A549 (cell line): ENCODE measurements at regions of chr19 and their contacts with region 1.

Region 1: DNA sequence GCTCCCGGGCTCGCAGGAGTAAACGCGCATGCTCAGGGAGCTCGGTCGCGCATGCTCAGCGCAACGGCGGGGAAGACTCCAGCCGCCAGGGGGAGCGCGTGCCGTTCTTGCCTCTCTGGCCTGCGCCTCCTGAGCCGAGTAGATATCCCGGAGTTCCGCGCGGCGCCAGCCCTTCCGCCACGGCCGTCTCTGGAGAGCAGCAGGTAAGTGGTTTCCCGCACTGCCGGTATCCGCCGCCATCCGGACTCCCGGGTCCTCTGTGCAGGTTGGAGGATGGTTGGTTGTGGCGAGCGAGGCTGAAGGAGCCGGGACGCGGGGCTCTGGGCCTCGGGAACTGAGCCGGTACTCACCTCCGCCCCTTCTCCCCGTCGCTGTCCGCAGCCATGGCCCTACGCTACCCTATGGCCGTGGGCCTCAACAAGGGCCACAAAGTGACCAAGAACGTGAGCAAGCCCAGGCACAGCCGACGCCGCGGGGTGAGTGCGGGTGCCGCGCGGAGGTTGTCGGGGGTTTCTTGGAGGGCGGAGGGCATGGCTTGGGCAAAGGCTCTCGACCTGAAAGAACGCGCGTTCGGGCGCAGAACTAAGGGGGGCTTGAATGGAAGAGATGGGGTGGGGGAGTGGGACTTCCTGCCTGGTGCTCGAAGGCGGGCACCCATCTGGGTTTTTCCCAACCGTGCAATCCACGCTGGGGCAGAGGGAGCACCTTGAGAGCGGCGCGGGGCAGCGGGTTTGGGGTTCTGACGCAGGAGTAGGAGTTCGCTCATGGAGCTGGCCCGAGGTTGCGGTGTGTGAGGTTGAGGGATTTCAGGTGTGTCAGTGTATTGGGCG is at the start of gene RPL36:
- DNase-seq: peak; percentile 84 to 96
- ATAC-seq: peak; percentile 16 to 64
- H3K4me3 ChIP-seq: peak within 1 kb of the TSS; percentile 92
- H3K27ac ChIP-seq: peak within 1 kb of the TSS; percentile 93 to 97
- H3K4me1 ChIP-seq: peaks cover 13% of the 10 kb centered on the region
- CTCF ChIP-seq: peak; percentile 63
- EP300 ChIP-seq: no peak
- POLR2A ChIP-seq: peak; percentile 94
- RAD21 ChIP-seq: no peak
- polyA plus RNA-seq, gene RPL36: 329 and 368 TPM in 2 replicates

Region 2: DNA sequence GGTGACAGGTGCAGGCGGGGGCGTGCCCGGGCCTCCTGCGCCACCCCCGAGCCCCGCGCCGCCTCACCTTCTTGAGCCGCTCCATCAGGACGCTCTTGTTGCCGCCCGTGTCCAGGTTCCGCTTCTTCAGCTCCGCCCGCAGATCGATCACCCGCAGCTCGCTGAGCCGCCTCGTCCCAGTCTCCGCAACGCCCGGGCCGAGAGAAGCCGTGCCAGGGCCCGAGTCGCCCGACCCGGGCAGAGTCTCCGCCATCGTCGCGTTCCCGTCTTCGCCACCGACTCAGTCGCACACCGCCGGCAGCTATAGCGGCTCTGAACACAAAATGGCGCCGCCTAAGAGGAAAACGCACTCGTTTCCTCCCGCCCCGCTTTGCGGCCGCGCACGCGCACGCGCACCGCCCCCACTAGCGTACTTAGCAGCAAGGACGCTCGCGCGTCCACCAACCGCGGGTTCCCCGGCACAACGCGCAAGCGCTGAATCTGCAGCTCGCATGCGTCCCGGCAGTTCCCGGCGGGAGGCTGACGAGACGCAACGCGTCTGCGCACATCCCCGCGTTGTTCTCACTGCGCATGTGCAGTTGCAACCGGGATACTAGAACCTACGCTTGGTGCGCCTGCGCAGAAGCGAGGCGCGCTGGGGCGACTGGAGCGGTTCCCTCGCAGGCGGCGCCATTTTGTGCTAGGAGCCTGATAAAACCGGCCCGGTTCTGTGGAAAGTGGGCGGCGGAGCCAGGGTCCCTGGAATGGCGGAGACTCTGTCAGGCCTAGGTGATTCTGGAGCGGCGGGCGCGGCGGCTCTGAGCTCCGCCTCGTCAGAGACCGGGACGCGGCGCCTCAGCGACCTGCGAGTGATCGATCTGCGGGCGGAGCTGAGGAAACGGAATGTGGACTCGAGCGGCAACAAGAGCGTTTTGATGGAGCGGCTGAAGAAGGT is 67.6 kb before region 1 on chr19 and contains the starts of genes SAFB and SAFB2:
- CTCF ChIA-PET with region 1: interaction called, 5 read pairs
- POLR2A ChIA-PET with region 1: interaction called, 13 read pairs
- DNase-seq: peak; percentile 90 to 99
- ATAC-seq: peak; percentile 90 to 94
- H3K4me3 ChIP-seq: peak within 1 kb of the TSS; percentile 93
- H3K27ac ChIP-seq: peak within 1 kb of the TSS; percentile 93 to 97
- H3K4me1 ChIP-seq: peaks cover 30% of the 10 kb centered on the region
- CTCF ChIP-seq: no peak
- EP300 ChIP-seq: no peak
- POLR2A ChIP-seq: peak; percentile 88
- RAD21 ChIP-seq: no peak
- polyA plus RNA-seq, gene SAFB: 37.5 and 55.0 TPM in 2 replicates
- polyA plus RNA-seq, gene SAFB2: 23.4 and 33.2 TPM in 2 replicates

Region 3: GRCh38 chr19:5703829-5704818 is 13.8 kb after region 1 on chr19:
- CTCF ChIA-PET with region 1: interaction called, 7 read pairs
- POLR2A ChIA-PET with region 1: interaction called, 11 read pairs
- DNase-seq: no peak
- ATAC-seq: peak; percentile 11 to 20; a peak in 4 of 6 replicates
- H3K4me3 ChIP-seq: no peak overlapping the region
- H3K27ac ChIP-seq: no peak overlapping the region
- H3K4me1 ChIP-seq: 0 out of 3 replicates have a peak, but pooled peaks cover 3% of the 10 kb centered on the region
- CTCF ChIP-seq: no peak
- EP300 ChIP-seq: no peak
- POLR2A ChIP-seq: no peak
- RAD21 ChIP-seq: no peak

Region 4: DNA sequence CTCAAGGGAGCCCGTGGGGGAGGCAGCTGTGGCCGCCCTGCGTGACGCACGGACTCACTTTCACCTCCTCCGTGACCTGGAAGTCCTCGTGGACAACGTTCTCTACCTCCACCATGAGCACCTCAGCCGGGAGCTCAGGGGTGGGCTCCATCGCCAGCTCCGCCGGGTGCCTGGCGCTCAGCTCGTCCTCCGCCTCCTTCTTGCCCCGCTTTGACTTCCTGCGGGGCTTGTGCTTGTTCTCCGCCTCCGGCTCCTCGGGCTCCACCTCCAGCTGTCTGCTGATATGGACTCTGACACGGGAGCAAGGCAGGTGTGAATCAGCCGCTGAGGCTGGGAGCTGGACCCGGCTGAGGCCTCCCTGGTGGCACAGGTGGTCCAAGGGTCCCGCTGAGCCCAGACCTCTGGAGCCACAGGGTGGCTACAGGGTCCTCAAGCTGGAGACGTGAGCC is 21.4 kb after region 1 on chr19:
- CTCF ChIA-PET with region 1: interaction called, 14 read pairs
- POLR2A ChIA-PET with region 1: interaction called, 5 read pairs
- DNase-seq: no peak
- ATAC-seq: no peak
- H3K4me3 ChIP-seq: no peak overlapping the region
- H3K27ac ChIP-seq: no peak overlapping the region
- H3K4me1 ChIP-seq: no peaks in the 10 kb centered on the region
- CTCF ChIP-seq: no peak
- EP300 ChIP-seq: no peak
- POLR2A ChIP-seq: no peak
- RAD21 ChIP-seq: no peak

Region 5: GRCh38 chr19:5719961-5720790 is 29.8 kb after region 1 on chr19 and contains the starts of genes CATSPERD and LONP1:
- CTCF ChIA-PET with region 1: interaction called, 8 read pairs
- POLR2A ChIA-PET with region 1: interaction called, 45 read pairs
- DNase-seq: peak; percentile 94 to 98
- ATAC-seq: peak; percentile 92 to 94
- H3K4me3 ChIP-seq: peak within 1 kb of the TSS; percentile 100
- H3K27ac ChIP-seq: peak within 1 kb of the TSS; percentile 97 to 100
- H3K4me1 ChIP-seq: peaks cover 11% of the 10 kb centered on the region; the same call in 2 of the 3 replicates
- CTCF ChIP-seq: peak; percentile 69
- EP300 ChIP-seq: no peak
- POLR2A ChIP-seq: peak; percentile 61
- RAD21 ChIP-seq: no peak
- polyA plus RNA-seq, gene CATSPERD: 0.03 TPM in 1 of 2 replicates, not detected in the other
- polyA plus RNA-seq, gene LONP1: 41.2 and 42.7 TPM in 2 replicates